Activated CD4-positive, alpha-beta T cell treated with anti-CD3 and anti-CD28 coated beads for 36 hours (primary cell): ENCODE measurements at regions of chr6 and their contacts with region 1.

Region 1: GRCh38 chr6:24064082-24064481 is 61.9 kb upstream of the NRSN1 start:
- DNase-seq: no peak
- ATAC-seq: no peak
- H3K4me3 Mint-ChIP-seq: no peak overlapping the region
- H3K27ac Mint-ChIP-seq: no peak overlapping the region
- H3K4me1 Mint-ChIP-seq: no peaks in the 10 kb centered on the region
- H3K27me3 Mint-ChIP-seq: peaks cover 7% of the 10 kb centered on the region

Region 2: GRCh38 chr6:24205020-24205492 is 141.0 kb after region 1 on chr6:
- CTCF ChIA-PET with region 1: no interaction called
- POLR2A ChIA-PET with region 1: no interaction called
- intact Hi-C with region 1: loop called in 1 of 2 experiments (anchors 1 kb)
- DNase-seq: peak; percentile 18
- ATAC-seq: no peak
- H3K4me3 Mint-ChIP-seq: no peak overlapping the region
- H3K27ac Mint-ChIP-seq: no peak overlapping the region
- H3K4me1 Mint-ChIP-seq: no peaks in the 10 kb centered on the region
- H3K27me3 Mint-ChIP-seq: peaks cover 6% of the 10 kb centered on the region

Region 3: GRCh38 chr6:24274441-24275083 is 210.5 kb after region 1 on chr6:
- CTCF ChIA-PET with region 1: interaction called, 3 read pairs
- POLR2A ChIA-PET with region 1: no interaction called
- intact Hi-C with region 1: loop called in 1 of 2 experiments (anchors 5 kb)
- DNase-seq: no peak
- ATAC-seq: no peak
- H3K4me3 Mint-ChIP-seq: no peak overlapping the region
- H3K27ac Mint-ChIP-seq: no peak overlapping the region
- H3K4me1 Mint-ChIP-seq: no peaks in the 10 kb centered on the region
- H3K27me3 Mint-ChIP-seq: peaks cover 14% of the 10 kb centered on the region